ENCODE measurements at regions of chr12 and their contacts with region 1.

Region 1: GRCh38 chr12:103956516-103957027 is 9.1 kb upstream of the TDG start:
- DNase-seq: no peak
- H3K4me3 ChIP-seq: peak overlapping the region; percentile 52 to 95 (median 82)
- H3K27ac ChIP-seq: peak overlapping the region; percentile 81 to 95 (median 92)
- H3K4me1 ChIP-seq: peaks cover 9 to 35% (median 13%) of the 10 kb centered on the region in 3 donors
- H3K27me3 ChIP-seq: no peaks in the 10 kb centered on the region
- CTCF ChIP-seq: no peak
- POLR2A ChIP-seq: no peak

Region 2: DNA sequence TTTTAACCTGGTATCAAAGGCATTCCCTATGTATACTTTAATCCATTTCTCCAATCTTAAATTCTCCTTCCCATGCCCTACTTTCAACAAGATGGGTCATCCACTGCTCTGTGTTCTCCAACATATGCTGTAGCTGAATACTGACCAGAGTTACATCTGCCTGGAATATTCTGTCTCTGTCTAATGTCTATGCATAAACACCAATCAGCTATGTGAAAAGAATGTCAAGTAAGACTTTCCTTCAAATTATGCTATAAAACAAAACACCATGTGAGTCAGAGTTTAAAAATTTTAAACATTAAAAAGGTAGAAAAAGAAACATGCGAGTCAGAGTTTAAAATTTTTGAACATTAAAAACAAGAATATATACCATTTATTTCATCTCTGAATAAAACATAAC is 134.8 kb before region 1 on chr12:
- intact Hi-C with region 1: no loop called
- DNase-seq: no peak
- H3K4me3 ChIP-seq: no peak overlapping the region
- H3K27ac ChIP-seq: no peak overlapping the region
- H3K4me1 ChIP-seq: no peaks in the 10 kb centered on the region
- H3K27me3 ChIP-seq: no peaks in the 10 kb centered on the region
- CTCF ChIP-seq: no peak
- POLR2A ChIP-seq: no peak

Region 3: GRCh38 chr12:104064031-104064822 is 107.7 kb after region 1 on chr12 and contains the start of gene HCFC2:
- intact Hi-C with region 1: loop called (anchors 10 kb)
- DNase-seq: peak; percentile 50
- H3K4me3 ChIP-seq: peak within 1 kb of the TSS; percentile 66 to 93 (median 87)
- H3K27ac ChIP-seq: peak within 1 kb of the TSS; percentile 90 to 94 (median 93)
- H3K4me1 ChIP-seq: peaks cover 12 to 34% (median 14%) of the 10 kb centered on the region in 3 donors
- H3K27me3 ChIP-seq: no peaks in the 10 kb centered on the region
- CTCF ChIP-seq: no peak
- POLR2A ChIP-seq: peak in 1 of 4 donors; percentile 72
- total RNA-seq, gene HCFC2: 10.1 to 17.7 (median 14.7) TPM

Region 4: GRCh38 chr12:105120551-105120950 is 1164.0 kb after region 1 on chr12:
- intact Hi-C with region 1: no loop called
- DNase-seq: no peak
- H3K4me3 ChIP-seq: no peak overlapping the region
- H3K27ac ChIP-seq: no peak overlapping the region
- H3K4me1 ChIP-seq: no peaks in the 10 kb centered on the region
- H3K27me3 ChIP-seq: no peaks in the 10 kb centered on the region
- CTCF ChIP-seq: no peak
- POLR2A ChIP-seq: no peak

Measured in esophagus squamous epithelium (tissue), 5 donors.